Caco-2 (cell line): ENCODE measurements at regions of chr11 and their contacts with region 1.

Region 1: GRCh38 chr11:88301488-88302140 is 35.9 kb downstream of the CTSC start:
- DNase-seq: no peak
- H3K4me3 ChIP-seq: no peak overlapping the region
- H3K4me3 Mint-ChIP-seq: no peak overlapping the region
- H3K27ac Mint-ChIP-seq: peak overlapping the region; percentile 19
- H3K4me1 ChIP-seq: peaks cover 10% of the 10 kb centered on the region
- H3K4me1 Mint-ChIP-seq: peaks cover 30% of the 10 kb centered on the region
- H3K27me3 ChIP-seq: no peaks in the 10 kb centered on the region
- H3K27me3 Mint-ChIP-seq: no peaks in the 10 kb centered on the region
- CTCF ChIP-seq: no peak

Region 2: GRCh38 chr11:88345408-88345807 is 43.8 kb after region 1 on chr11:
- CTCF ChIA-PET with region 1: no interaction called
- POLR2A ChIA-PET with region 1: no interaction called
- intact Hi-C with region 1: no loop called
- DNase-seq: no peak
- H3K4me3 ChIP-seq: no peak overlapping the region
- H3K4me3 Mint-ChIP-seq: no peak overlapping the region
- H3K27ac Mint-ChIP-seq: no peak overlapping the region
- H3K4me1 ChIP-seq: peaks cover 14% of the 10 kb centered on the region
- H3K4me1 Mint-ChIP-seq: no peaks in the 10 kb centered on the region
- H3K27me3 ChIP-seq: no peaks in the 10 kb centered on the region
- H3K27me3 Mint-ChIP-seq: no peaks in the 10 kb centered on the region
- CTCF ChIP-seq: no peak

Region 3: GRCh38 chr11:88402192-88402715 is 100.6 kb after region 1 on chr11:
- CTCF ChIA-PET with region 1: no interaction called
- POLR2A ChIA-PET with region 1: no interaction called
- intact Hi-C with region 1: loop called (anchors 1 kb)
- DNase-seq: peak in 1 of 2 experiments; percentile 48
- H3K4me3 ChIP-seq: no peak overlapping the region
- H3K4me3 Mint-ChIP-seq: peak overlapping the region; percentile 13
- H3K27ac Mint-ChIP-seq: peak overlapping the region; percentile 7
- H3K4me1 ChIP-seq: peaks cover 4% of the 10 kb centered on the region; the same call in 1 of the 2 replicates
- H3K4me1 Mint-ChIP-seq: peaks cover 34% of the 10 kb centered on the region
- H3K27me3 ChIP-seq: no peaks in the 10 kb centered on the region
- H3K27me3 Mint-ChIP-seq: no peaks in the 10 kb centered on the region
- CTCF ChIP-seq: no peak